OCI-LY7 (cell line): ENCODE measurements at regions of chr9 and their contacts with region 1.

Region 1: GRCh38 chr9:5425006-5425628 is 12.6 kb downstream of the PLGRKT start:
- DNase-seq: peak; percentile 56
- H3K4me3 ChIP-seq: no peak overlapping the region
- H3K27ac ChIP-seq: no peak overlapping the region
- H3K4me1 ChIP-seq: no peaks in the 10 kb centered on the region
- CTCF ChIP-seq: peak; percentile 83

Region 2: DNA sequence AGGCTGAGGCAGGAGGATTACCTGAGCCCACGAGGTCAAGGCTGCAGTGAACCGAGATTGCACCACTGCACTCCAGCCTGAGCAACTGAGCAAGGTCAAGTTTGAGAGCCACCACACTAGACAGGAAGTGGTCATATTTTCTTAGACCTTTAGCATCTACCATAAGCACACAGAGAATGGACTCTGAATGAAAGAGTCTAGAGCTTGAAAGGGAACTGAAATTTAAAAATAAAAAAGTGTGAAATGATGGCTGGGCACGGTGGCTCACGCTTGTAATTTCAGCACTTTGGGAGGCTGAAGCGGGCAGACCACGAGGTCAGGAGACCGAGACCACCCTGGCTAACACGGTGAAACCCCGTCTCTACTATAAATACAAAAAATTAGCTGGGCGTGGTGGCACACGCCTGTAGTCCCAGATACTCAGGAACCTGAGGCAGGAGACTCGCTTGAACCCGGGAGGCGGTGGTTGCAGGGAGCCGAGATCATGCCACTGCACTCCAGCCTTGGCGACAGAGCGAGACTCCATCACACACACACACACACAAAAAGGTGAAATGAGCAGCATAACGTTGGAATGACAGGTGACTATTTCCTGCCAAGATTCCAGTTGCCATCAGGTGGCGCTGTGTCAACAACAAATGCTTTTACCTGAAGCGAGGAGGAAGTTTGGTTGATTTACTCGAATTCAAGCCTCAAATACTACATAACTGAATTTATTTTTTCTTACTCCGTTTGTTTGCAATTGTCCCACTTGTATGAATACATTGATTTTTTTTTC is 662.8 kb before region 1 on chr9:
- CTCF ChIA-PET with region 1: no interaction called
- POLR2A ChIA-PET with region 1: no interaction called
- intact Hi-C with region 1: loop called (anchors 5 kb)
- DNase-seq: peak; percentile 87
- H3K4me3 ChIP-seq: peak overlapping the region; percentile 58
- H3K27ac ChIP-seq: no peak overlapping the region
- H3K4me1 ChIP-seq: peaks cover 17% of the 10 kb centered on the region
- CTCF ChIP-seq: peak; percentile 90

Region 3: DNA sequence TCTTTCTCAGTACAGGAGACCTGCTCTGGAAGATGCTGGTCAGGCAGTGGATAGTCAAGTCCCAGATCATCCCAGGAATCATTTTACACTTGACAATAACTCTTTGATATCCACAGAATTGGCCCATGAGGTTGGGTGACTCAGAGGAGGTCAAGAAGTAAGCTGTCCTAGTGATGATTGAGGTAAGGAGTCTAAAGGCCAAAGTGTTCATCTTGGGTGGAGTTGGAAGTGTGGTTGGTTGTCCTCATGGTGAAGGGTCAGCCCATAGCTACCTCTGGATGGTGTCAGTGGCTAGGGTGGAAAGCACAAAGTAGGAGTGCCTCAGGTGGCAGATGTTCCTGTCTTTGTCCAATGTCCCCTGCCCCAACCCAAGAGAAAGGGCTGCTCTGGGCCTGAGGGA is 656.4 kb before region 1 on chr9:
- CTCF ChIA-PET with region 1: interaction called, 13 read pairs
- POLR2A ChIA-PET with region 1: no interaction called
- intact Hi-C with region 1: loop called (anchors 5 kb)
- DNase-seq: no peak
- H3K4me3 ChIP-seq: no peak overlapping the region
- H3K27ac ChIP-seq: no peak overlapping the region
- H3K4me1 ChIP-seq: no peaks in the 10 kb centered on the region
- CTCF ChIP-seq: no peak

Region 4: GRCh38 chr9:5191985-5192384 is 233.1 kb before region 1 on chr9:
- CTCF ChIA-PET with region 1: no interaction called
- POLR2A ChIA-PET with region 1: no interaction called
- intact Hi-C with region 1: loop called (anchors 5 kb)
- DNase-seq: no peak
- H3K4me3 ChIP-seq: no peak overlapping the region
- H3K27ac ChIP-seq: no peak overlapping the region
- H3K4me1 ChIP-seq: no peaks in the 10 kb centered on the region
- CTCF ChIP-seq: no peak

Region 5: DNA sequence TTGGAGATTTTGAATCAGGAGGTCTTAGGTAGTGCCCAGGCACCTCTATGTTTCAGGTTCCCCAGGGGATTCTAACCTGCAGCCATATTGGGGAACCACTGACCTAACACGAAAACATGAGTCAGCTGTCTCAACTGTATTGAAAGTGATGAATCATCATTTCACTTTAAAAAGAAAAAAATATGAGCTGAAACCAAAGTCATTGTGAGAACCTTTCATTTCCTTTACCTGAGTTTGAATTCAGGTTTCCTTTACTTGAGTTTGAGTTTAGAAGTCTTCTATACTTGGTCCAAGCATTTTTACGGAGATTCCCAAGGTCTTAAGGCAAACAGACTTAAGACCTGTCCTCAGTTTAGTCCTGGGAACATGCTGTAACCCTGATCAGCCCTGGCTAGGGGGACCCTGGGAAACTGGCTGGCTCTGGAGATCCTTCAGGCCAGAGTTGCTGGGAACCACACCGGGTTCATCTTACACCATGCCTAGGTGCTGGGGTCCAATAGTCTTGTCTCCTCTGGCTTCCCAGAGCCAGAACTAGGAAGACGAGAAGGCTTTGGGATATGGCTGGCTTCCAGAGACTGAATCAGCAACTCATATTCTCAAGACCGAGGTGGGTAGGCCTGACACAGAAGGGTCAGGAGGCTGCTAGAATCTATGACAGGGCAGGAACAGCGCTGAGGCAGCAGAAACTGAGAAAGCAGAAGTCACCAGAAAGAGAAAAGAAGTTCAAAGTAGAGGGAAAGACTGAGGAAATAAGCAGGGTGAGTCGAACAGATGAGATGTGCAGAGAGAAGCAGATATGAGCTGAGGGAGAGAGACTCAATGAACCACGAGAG is 68.8 kb after region 1 on chr9:
- CTCF ChIA-PET with region 1: no interaction called
- POLR2A ChIA-PET with region 1: no interaction called
- intact Hi-C with region 1: no loop called
- DNase-seq: peak; percentile 24
- H3K4me3 ChIP-seq: no peak overlapping the region
- H3K27ac ChIP-seq: no peak overlapping the region
- H3K4me1 ChIP-seq: no peaks in the 10 kb centered on the region
- CTCF ChIP-seq: no peak